GM12878 (cell line): ENCODE measurements at regions of chr2 and their contacts with region 1.

Region 1: GRCh38 chr2:207091176-207091575 is 74.6 kb downstream of the KLF7 start:
- DNase-seq: no peak
- ATAC-seq: no peak
- H3K4me3 ChIP-seq: no peak overlapping the region
- H3K27ac ChIP-seq: no peak overlapping the region
- H3K4me1 ChIP-seq: peaks cover 9% of the 10 kb centered on the region; the same call in 1 of the 2 replicates
- H3K27me3 ChIP-seq: no peaks in the 10 kb centered on the region
- CTCF ChIP-seq: no peak
- EP300 ChIP-seq: no peak
- POLR2A ChIP-seq: no peak
- RAD21 ChIP-seq: no peak

Region 2: GRCh38 chr2:207073801-207074678 is 17.1 kb before region 1 on chr2:
- CTCF ChIA-PET with region 1: interaction called, 19 read pairs
- POLR2A ChIA-PET with region 1: no interaction called
- RAD21 ChIA-PET with region 1: interaction called, 3 read pairs
- SMC1A ChIA-PET with region 1: interaction called, 8 read pairs
- in situ Hi-C with region 1: no loop called
- intact Hi-C with region 1: no loop called
- DNase-seq: no peak
- ATAC-seq: peak; percentile 56
- H3K4me3 ChIP-seq: no peak overlapping the region
- H3K27ac ChIP-seq: no peak overlapping the region
- H3K4me1 ChIP-seq: peaks cover 23% of the 10 kb centered on the region
- H3K27me3 ChIP-seq: no peaks in the 10 kb centered on the region
- CTCF ChIP-seq: no peak
- EP300 ChIP-seq: no peak
- POLR2A ChIP-seq: no peak
- RAD21 ChIP-seq: no peak

Region 3: GRCh38 chr2:207115715-207116364 is 24.7 kb after region 1 on chr2:
- CTCF ChIA-PET with region 1: no interaction called
- POLR2A ChIA-PET with region 1: no interaction called
- RAD21 ChIA-PET with region 1: no interaction called
- SMC1A ChIA-PET with region 1: no interaction called
- in situ Hi-C with region 1: no loop called
- intact Hi-C with region 1: no loop called
- DNase-seq: no peak
- ATAC-seq: no peak
- H3K4me3 ChIP-seq: no peak overlapping the region
- H3K27ac ChIP-seq: no peak overlapping the region
- H3K4me1 ChIP-seq: no peaks in the 10 kb centered on the region
- H3K27me3 ChIP-seq: no peaks in the 10 kb centered on the region
- CTCF ChIP-seq: no peak
- EP300 ChIP-seq: no peak
- POLR2A ChIP-seq: no peak
- RAD21 ChIP-seq: no peak